Mucosa of descending colon (tissue), 3 donors: ENCODE measurements at regions of chr1 and their contacts with region 1.

Region 1: GRCh38 chr1:117534995-117535467 is 70.8 kb upstream of the TENT5C start:
- DNase-seq: peak in 2 of 3 donors; percentile 44 to 49
- ATAC-seq: peak; percentile 83
- H3K4me3 ChIP-seq: no peak overlapping the region
- H3K4me1 ChIP-seq: no peaks in the 10 kb centered on the region
- CTCF ChIP-seq: peak; percentile 55

Region 2: DNA sequence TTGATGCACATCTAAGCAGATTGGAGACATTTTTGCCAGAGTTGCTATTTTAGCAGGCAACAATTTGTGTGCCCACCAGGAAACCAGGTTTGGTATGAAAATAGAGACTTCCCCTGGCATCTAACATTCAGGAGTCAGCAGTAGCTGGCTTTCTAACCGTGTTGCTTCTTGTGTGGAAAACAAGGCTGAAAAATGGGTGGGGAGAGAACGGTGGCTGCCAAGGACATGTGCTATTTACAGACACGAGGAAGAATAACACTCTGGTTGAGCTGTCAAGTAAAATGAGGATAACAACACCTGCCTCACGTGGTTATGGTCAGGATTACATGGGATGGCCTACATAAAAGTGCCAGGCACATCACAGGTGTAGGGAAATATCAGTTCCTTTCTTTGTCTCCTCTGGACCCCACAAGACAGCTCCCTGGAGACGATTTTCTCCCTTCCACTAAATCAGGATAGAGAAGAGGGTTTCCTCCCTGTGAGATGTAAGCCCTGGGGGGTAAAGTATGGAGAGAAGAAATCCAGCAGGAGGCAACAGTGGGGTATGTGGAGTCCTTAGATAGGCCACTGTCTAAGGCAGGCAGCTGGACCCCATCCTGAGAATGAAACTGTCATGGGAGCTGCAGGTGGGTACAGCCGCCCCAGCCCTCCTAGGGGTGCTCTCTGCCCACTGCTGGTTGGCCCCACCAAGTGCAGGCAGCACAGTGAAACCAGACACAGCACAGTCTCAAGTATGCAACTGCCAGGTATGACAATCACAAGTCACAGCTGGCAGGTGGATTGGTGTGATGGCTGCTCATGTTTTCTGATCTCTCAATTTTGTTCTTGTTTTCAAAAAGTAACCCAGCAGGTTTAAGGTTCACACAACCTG is 151.1 kb after region 1 on chr1:
- intact Hi-C with region 1: loop called in 1 of 2 experiments (anchors 10 kb)
- DNase-seq: peak in 1 of 3 donors; percentile 43
- ATAC-seq: peak; percentile 63
- H3K4me3 ChIP-seq: no peak overlapping the region
- H3K4me1 ChIP-seq: peaks cover 10% of the 10 kb centered on the region
- CTCF ChIP-seq: no peak